ENCODE measurements at regions of chr3 and their contacts with region 1.

Region 1: DNA sequence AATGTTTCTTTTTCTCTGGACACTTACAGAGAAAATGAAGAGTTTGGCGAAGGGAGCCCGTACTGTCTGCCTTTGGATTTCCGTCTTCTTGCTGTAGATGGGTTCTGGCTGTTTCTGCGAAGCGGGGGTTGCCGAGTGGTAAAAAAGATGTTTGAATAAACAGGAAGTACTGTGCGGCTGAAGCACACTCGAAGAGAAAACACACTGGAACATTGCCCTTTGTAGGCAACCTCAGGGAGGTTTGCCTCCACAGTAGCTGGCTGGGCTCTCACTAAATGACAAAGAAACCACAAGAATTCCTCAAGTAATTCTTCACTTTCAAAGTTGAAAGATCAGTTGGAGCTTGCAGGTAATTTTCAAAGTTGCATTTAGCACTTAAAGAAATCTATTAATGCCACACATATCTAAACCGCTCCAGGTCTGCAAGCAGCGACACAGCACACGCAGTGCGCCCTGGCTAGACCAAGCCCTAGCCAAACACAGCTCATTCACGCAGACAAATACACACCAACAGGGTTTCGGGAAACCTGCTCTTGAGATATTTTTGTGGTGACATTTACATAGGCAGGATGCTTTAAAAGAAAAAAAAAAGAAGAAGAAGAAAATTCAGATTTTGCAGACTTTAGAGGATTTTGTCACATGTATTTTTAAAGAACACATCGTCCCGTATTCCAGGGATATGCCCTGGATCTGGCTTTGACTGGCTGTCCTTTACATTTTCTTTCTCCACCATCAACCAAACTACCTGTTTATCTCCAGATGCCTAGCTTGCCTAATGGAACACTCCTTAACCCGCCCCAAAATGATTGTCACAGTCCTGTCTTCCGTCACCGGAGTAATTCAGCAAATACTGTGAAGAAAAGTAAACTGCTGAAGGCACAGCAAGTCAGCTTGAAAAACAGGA is 452.8 kb downstream of the FOXP1 start:
- DNase-seq: peak; percentile 60 to 74 (median 70)
- ATAC-seq: peak; percentile 59 to 76 (median 70)
- H3K4me3 ChIP-seq: peak overlapping the region; percentile 36 to 67 (median 55)
- H3K27ac ChIP-seq: peak overlapping the region; percentile 78 to 94 (median 88)
- H3K4me1 ChIP-seq: peaks cover 3 to 80% (median 54%) of the 10 kb centered on the region in 12 donors
- H3K27me3 ChIP-seq: no peaks in the 10 kb centered on the region
- CTCF ChIP-seq: no peak
- POLR2A ChIP-seq: peak in 1 of 2 donors; percentile 43

Region 2: GRCh38 chr3:70951316-70951715 is 179.4 kb before region 1 on chr3:
- intact Hi-C with region 1: no loop called
- DNase-seq: no peak
- ATAC-seq: no peak
- H3K4me3 ChIP-seq: no peak overlapping the region
- H3K27ac ChIP-seq: no peak overlapping the region
- H3K4me1 ChIP-seq: peaks cover 0 to 19% (median 2%) of the 10 kb centered on the region in 12 donors
- H3K27me3 ChIP-seq: no peaks in the 10 kb centered on the region
- CTCF ChIP-seq: no peak
- POLR2A ChIP-seq: no peak

Region 3: DNA sequence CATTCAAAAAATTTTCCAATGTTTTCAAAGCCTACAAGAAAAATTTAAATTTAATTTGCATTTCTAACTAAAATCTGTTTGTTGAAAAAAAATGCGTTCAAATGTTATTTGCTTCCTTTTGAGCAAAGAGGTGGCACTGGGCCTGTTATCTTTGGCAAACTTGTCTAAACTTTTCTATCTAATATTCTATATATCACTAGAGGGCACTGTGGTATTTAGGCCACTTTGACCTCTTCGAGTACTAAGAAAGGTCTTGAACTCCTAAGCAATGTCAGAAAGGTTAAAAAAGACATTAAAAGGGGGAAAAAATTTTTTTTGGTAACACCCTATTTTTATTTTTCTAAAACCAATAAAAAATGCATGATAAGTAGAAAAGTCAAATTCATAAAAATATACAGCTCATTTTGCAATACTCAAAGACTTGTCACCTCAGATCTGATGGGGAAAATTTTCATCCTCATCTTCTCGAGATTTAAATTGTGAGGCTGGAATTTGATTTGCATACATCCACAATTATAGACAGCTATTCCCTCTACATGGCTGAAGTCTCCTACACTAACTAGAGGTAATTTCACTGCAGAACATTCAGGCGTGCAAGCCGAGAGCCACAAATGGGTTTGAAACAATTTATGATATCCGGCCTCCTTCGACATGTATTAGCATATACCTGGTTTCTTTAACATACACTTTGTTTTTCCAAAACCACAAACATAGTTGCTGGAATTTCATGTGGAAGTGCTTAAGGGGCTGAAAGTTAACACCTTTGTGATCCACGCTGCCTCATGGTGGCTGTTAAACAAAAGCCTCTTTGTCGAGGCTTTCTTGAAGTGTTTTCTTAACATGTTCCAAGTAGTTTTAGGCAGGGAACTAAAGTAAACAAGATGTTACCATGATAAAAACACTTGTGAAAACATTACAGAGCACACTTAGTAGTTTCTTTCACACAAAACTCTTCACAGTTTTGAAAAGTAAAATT is 123.6 kb before region 1 on chr3:
- intact Hi-C with region 1: loop called in 1 of 10 experiments (anchors 5 kb)
- DNase-seq: no peak
- ATAC-seq: peak in 3 of 4 donors; percentile 22 to 69 (median 65)
- H3K4me3 ChIP-seq: no peak overlapping the region
- H3K27ac ChIP-seq: peak overlapping the region in 10 of 12 donors; percentile 4 to 55 (median 32)
- H3K4me1 ChIP-seq: peaks cover 0 to 78% (median 39%) of the 10 kb centered on the region in 12 donors
- H3K27me3 ChIP-seq: no peaks in the 10 kb centered on the region
- CTCF ChIP-seq: peak in 11 of 12 donors; percentile 38 to 72 (median 55)
- POLR2A ChIP-seq: no peak

Region 4: GRCh38 chr3:71064288-71064955 is 66.3 kb before region 1 on chr3:
- intact Hi-C with region 1: loop called in 7 of 10 experiments (anchors 2 to 5 kb)
- DNase-seq: peak in 3 of 5 donors; percentile 36 to 47 (median 39)
- ATAC-seq: peak; percentile 20 to 60 (median 52)
- H3K4me3 ChIP-seq: peak overlapping the region; percentile 28 to 87 (median 75)
- H3K27ac ChIP-seq: peak overlapping the region; percentile 91 to 99 (median 97)
- H3K4me1 ChIP-seq: peaks cover 5 to 74% (median 51%) of the 10 kb centered on the region in 12 donors
- H3K27me3 ChIP-seq: no peaks in the 10 kb centered on the region
- CTCF ChIP-seq: peak in 2 of 12 donors; percentile 1 to 17
- POLR2A ChIP-seq: no peak

Region 5: DNA sequence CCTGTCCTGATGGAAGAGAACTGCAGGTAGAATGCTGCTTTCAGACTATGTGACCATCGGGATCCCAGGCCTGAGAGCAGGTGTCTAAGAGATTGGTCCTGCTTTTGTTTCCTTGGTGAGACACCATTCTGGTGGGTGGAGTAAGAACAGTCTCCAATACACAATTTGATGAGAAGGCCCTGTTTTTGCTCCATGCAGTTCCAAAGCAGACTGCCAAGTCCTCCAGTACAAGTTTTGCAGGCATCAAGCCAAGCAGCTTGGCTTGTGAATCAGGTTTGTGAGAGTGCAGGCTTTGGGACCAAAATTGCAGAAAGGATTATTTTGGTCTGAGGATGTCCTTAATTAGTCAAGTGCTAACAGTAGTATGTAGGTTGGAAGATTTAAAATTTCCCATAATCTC is 71.2 kb after region 1 on chr3:
- intact Hi-C with region 1: loop called in 1 of 10 experiments (anchors 5 kb)
- DNase-seq: peak in 4 of 5 donors; percentile 65 to 83 (median 70)
- ATAC-seq: peak; percentile 70 to 85 (median 78)
- H3K4me3 ChIP-seq: no peak overlapping the region
- H3K27ac ChIP-seq: peak overlapping the region in 4 of 12 donors; percentile 7 to 62 (median 24)
- H3K4me1 ChIP-seq: peaks cover 5 to 40% (median 22%) of the 10 kb centered on the region in 12 donors
- H3K27me3 ChIP-seq: no peaks in the 10 kb centered on the region
- CTCF ChIP-seq: no peak
- POLR2A ChIP-seq: no peak

Region 6: GRCh38 chr3:71226565-71227269 is 96.0 kb after region 1 on chr3:
- intact Hi-C with region 1: loop called in 1 of 10 experiments (anchors 10 kb)
- DNase-seq: peak; percentile 61 to 84 (median 72)
- ATAC-seq: peak; percentile 87 to 95 (median 95)
- H3K4me3 ChIP-seq: peak overlapping the region in 10 of 12 donors; percentile 14 to 53 (median 42)
- H3K27ac ChIP-seq: peak overlapping the region; percentile 18 to 82 (median 68)
- H3K4me1 ChIP-seq: peaks cover 0 to 37% (median 25%) of the 10 kb centered on the region in 12 donors
- H3K27me3 ChIP-seq: no peaks in the 10 kb centered on the region
- CTCF ChIP-seq: no peak
- POLR2A ChIP-seq: no peak

Region 7: GRCh38 chr3:71247221-71247976 is 116.7 kb after region 1 on chr3:
- intact Hi-C with region 1: loop called in 5 of 10 experiments (anchors 2 to 10 kb)
- DNase-seq: peak in 1 of 5 donors; percentile 47
- ATAC-seq: peak; percentile 32 to 64 (median 54)
- H3K4me3 ChIP-seq: no peak overlapping the region
- H3K27ac ChIP-seq: peak overlapping the region in 6 of 12 donors; percentile 11 to 81 (median 70)
- H3K4me1 ChIP-seq: peaks cover 0 to 62% (median 35%) of the 10 kb centered on the region in 12 donors
- H3K27me3 ChIP-seq: no peaks in the 10 kb centered on the region
- CTCF ChIP-seq: peak in 3 of 12 donors; percentile 9 to 13 (median 12)
- POLR2A ChIP-seq: no peak

Measured in heart left ventricle (tissue), 16 donors.